ENCODE measurements at regions of chr5 and their contacts with region 1.

Region 1: DNA sequence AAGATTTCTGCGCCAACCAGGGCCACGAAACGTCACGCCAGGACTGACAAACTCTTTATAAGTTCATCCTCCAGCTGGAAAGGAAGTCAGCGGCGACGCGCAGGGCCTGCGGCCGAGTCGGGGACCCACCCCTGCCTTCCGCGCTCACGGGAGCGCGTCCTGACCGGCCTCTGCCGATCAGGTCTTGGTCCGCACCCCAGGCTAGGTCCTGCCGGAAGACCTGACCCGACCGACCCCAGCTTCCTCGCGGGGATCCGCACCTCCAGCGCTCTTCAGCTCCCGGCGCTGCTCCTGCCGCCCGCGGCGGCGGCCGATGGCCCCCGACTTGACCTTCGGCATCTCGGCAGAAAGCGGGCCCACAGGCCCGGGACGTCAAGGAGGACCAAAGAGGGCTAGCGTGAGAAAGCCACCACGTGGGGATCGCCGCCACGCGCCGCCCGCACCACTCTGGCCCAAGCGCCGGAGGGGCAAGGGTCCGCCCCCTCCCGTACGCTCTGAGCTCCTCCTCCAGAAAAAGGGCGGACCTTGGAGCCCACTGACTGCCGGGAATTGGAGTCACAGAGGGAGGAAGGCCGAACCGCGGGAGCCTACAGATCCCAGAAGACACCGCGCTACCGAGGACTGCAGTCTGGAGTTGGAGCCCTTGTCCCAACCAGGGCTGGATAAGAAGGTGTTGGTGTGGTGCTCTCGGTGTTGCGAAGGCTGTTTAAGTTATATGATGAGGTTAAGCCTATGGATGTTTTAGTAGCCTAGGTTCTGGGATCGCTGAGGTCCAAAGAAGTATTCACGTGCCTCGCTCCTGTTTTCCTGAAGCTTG is at the start of gene DIMT1:
- DNase-seq: peak; percentile 93
- ATAC-seq: peak; percentile 99
- H3K4me3 Mint-ChIP-seq: peak within 1 kb of the TSS; percentile 99
- H3K27ac Mint-ChIP-seq: peak within 1 kb of the TSS; percentile 100
- H3K4me1 Mint-ChIP-seq: peaks cover 21% of the 10 kb centered on the region
- H3K27me3 Mint-ChIP-seq: no peaks in the 10 kb centered on the region
- CTCF ChIP-seq: no peak
- total RNA-seq, gene DIMT1: 30.3 to 33.9 TPM (median 31.1 TPM) in 3 replicates

Region 2: DNA sequence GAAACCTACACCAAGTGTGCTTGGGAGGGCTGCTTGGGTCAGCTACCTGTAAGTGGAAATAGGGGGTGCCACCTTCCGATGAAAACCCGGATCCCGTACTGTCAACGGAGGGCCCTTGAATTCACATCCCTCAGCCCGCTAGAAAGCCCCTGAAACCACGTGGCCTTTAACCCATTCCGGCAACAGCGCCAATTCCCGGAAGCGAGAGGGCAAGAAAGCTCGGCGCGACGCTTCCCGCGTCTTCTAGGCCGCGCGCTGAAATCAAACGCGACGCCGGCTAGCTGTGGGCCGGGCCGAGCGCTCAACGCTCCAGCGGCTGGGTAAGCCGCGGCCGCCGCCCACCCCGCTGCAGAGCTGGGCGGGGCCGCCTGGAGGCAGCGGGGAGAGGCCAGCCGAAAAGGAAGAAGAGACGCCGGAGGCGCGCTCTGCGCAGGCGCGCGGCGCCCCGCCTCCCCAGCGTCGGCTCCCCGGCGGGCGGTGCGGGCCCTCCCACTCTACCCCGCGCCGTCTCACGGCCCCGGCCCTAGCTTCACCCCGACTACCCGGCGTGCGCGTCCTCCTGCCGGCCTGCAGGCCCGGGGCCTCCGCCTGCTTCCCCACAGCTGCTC is 97.8 kb before region 1 on chr5 and contains the start of gene KIF2A:
- CTCF ChIA-PET with region 1: interaction called, 6 read pairs
- POLR2A ChIA-PET with region 1: interaction called, 13 read pairs
- DNase-seq: peak; percentile 90
- ATAC-seq: peak; percentile 96
- H3K4me3 Mint-ChIP-seq: peak within 1 kb of the TSS; percentile 93
- H3K27ac Mint-ChIP-seq: peak within 1 kb of the TSS; percentile 95
- H3K4me1 Mint-ChIP-seq: peaks cover 42% of the 10 kb centered on the region
- H3K27me3 Mint-ChIP-seq: peaks cover 4% of the 10 kb centered on the region; the same call in 1 of the 2 replicates
- CTCF ChIP-seq: no peak
- total RNA-seq, gene KIF2A: 68.0 to 77.8 TPM (median 72.6 TPM) in 3 replicates